ENCODE measurements at regions of chr15 and their contacts with region 1.

Region 1: GRCh38 chr15:60932051-60932915 is 296.8 kb downstream of the RORA start:
- DNase-seq: peak; percentile 85 to 93
- H3K4me3 ChIP-seq: no peak overlapping the region; the same call in 1 of the 2 replicates
- H3K27ac ChIP-seq: peak overlapping the region; percentile 62
- H3K4me1 ChIP-seq: peaks cover 21% of the 10 kb centered on the region
- H3K27me3 ChIP-seq: no peaks in the 10 kb centered on the region
- CTCF ChIP-seq: peak; percentile 64

Region 2: DNA sequence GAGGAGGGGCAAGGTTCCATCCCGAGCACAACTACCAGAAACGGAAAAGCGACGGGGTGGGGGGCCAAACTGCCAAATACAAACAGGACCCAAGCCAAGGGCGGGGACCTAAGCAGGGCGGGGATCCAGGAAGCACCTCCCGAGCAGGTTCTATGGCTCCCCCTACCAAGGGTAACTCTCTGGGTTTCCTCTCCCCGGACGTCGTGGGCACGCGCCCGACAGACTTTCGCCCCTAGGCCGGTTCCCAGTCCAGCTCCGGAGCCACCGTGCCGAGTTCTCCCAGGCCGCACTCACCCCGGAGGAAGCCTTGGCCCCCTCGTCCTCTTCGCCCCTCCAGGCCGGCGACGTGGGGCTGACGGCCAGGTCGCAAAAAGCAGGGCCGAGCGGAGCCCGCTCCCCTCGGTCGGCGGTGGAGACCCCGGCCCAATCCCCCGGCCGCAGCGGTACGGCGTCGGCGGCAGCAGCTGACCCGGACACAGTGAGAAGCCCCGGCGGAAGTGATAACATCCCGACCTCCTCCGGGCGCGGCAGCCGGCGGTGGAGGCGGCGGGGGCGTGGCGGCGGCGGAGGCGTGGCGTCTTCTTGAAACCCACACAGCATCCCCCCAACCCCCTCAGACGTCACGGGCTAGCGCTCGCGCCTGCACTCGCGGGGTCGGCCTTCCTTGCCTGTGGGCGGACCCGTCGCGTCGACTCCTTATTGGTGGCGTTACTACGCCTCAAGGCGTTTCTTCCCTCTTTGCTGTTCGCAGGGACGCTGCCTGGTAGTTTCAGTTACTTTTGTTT is 1243.2 kb before region 1 on chr15 and contains the start of gene BNIP2:
- CTCF ChIA-PET with region 1: no interaction called
- POLR2A ChIA-PET with region 1: no interaction called
- intact Hi-C with region 1: loop called (anchors 1 kb)
- DNase-seq: peak; percentile 90 to 98
- H3K4me3 ChIP-seq: peak within 1 kb of the TSS; percentile 73
- H3K27ac ChIP-seq: peak within 1 kb of the TSS; percentile 95
- H3K4me1 ChIP-seq: peaks cover 15% of the 10 kb centered on the region
- H3K27me3 ChIP-seq: no peaks in the 10 kb centered on the region
- CTCF ChIP-seq: no peak
- total RNA-seq, gene BNIP2: 59.5 and 64.3 TPM in 2 replicates

Region 3: GRCh38 chr15:60507596-60508424 is 424.5 kb before region 1 on chr15:
- CTCF ChIA-PET with region 1: no interaction called
- POLR2A ChIA-PET with region 1: no interaction called
- intact Hi-C with region 1: loop called (anchors 5 kb)
- DNase-seq: peak in 1 of 2 experiments; percentile 45
- H3K4me3 ChIP-seq: no peak overlapping the region
- H3K27ac ChIP-seq: no peak overlapping the region
- H3K4me1 ChIP-seq: no peaks in the 10 kb centered on the region
- H3K27me3 ChIP-seq: no peaks in the 10 kb centered on the region
- CTCF ChIP-seq: peak; percentile 85

Region 4: GRCh38 chr15:60535743-60536142 is 396.5 kb before region 1 on chr15:
- CTCF ChIA-PET with region 1: no interaction called
- POLR2A ChIA-PET with region 1: no interaction called
- intact Hi-C with region 1: no loop called
- DNase-seq: no peak
- H3K4me3 ChIP-seq: no peak overlapping the region
- H3K27ac ChIP-seq: no peak overlapping the region
- H3K4me1 ChIP-seq: no peaks in the 10 kb centered on the region
- H3K27me3 ChIP-seq: no peaks in the 10 kb centered on the region
- CTCF ChIP-seq: no peak

Region 5: GRCh38 chr15:60585743-60586708 is 346.3 kb before region 1 on chr15:
- CTCF ChIA-PET with region 1: interaction called, 10 read pairs
- POLR2A ChIA-PET with region 1: no interaction called
- intact Hi-C with region 1: loop called (anchors 1 kb)
- DNase-seq: peak; percentile 38 to 48
- H3K4me3 ChIP-seq: no peak overlapping the region
- H3K27ac ChIP-seq: no peak overlapping the region
- H3K4me1 ChIP-seq: peaks cover 8% of the 10 kb centered on the region
- H3K27me3 ChIP-seq: no peaks in the 10 kb centered on the region
- CTCF ChIP-seq: peak; percentile 82

Region 6: DNA sequence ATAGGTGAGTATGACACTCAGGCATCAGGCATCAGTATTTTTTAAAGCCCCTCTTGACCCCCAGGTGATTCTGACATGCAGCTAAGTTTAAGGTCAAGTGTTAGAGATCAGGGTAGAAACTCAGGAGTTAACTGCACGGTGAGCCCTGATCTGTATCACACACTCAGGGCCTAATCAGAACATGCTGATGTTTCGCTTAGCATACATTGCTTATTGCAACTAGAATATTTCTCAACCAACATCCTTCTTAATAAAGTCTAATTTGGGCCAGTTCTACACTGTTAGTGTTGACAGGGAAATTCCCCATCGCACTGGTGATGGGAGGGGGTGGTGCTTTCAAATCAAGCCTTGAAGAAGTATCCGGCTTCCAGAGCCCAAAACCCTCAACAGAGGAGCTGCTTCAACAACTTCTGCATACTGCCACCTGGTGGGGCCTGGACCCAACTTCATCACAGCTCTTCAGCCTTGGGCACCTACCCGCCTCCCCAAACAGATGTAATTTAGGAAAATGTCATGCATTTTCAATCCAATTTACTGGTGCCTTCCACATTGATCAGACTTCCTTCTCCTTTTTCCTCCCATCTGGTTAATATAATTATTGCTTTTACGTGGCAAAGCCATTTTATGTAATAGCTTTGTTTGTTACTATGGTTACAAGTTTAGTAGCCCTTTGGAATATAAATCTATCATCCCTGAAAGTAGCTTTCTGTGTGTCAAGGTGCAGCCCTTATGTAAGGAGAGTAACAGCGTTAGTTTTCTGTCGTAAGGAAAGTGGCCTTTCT is 15.4 kb before region 1 on chr15:
- CTCF ChIA-PET with region 1: interaction called, 9 read pairs
- POLR2A ChIA-PET with region 1: interaction called, 8 read pairs
- intact Hi-C with region 1: loop called (anchors 1 kb)
- DNase-seq: peak; percentile 52 to 56
- H3K4me3 ChIP-seq: no peak overlapping the region
- H3K27ac ChIP-seq: no peak overlapping the region
- H3K4me1 ChIP-seq: peaks cover 26% of the 10 kb centered on the region
- H3K27me3 ChIP-seq: no peaks in the 10 kb centered on the region
- CTCF ChIP-seq: peak; percentile 78

Region 7: DNA sequence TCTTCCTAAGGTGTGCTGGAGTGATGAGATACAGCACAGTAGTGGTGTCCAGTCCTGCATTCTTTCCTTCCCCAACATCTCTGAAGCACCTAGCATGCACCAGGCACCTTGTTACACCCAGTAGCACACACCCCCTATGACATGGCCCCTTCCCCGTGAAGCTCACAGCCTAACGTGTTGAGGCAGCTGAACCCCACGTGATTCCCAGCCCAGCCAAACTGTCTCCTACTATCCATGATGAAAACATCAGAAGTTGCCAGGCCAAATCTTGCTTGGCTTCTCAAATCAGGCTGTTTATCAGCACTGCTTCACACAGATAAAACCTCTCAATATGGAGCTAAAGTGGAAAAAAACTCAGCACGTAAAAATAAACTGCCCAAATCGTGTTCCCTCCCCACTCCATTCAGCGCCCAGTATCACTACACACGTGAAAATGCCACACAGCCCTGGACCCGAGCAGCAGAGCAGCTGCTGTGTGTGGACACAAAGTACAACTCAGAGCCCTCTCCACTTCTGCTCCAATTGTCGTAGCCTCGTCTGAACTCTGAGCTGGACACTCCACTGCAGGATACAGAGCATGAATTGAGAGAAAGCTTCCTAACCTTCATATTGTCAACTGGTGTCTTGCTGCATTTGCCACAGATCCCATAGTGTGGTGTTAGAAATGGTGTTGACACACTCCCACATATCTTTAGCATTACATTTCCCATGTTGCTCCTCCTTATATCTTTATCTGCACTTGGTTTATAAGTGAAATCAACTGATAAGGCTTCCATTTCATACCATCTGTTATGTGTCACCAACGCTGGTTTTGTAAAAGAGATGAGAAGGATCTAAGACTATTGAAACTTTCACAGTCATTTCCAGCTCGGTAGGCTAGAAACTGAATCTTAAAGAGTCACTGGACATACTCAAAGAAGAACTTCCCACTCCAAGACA is 17.0 kb after region 1 on chr15:
- CTCF ChIA-PET with region 1: no interaction called
- POLR2A ChIA-PET with region 1: no interaction called
- intact Hi-C with region 1: no loop called
- DNase-seq: no peak
- H3K4me3 ChIP-seq: no peak overlapping the region
- H3K27ac ChIP-seq: no peak overlapping the region
- H3K4me1 ChIP-seq: no peaks in the 10 kb centered on the region
- H3K27me3 ChIP-seq: no peaks in the 10 kb centered on the region
- CTCF ChIP-seq: no peak

Measured in PC-9 (cell line).